Posterior vena cava (tissue), 2 donors: ENCODE measurements at regions of chr5 and their contacts with region 1.

Region 1: GRCh38 chr5:76069061-76069735 is 14.0 kb upstream of the SV2C start:
- DNase-seq: no peak

Region 2: GRCh38 chr5:76021936-76022584 is 47.1 kb before region 1 on chr5:
- intact Hi-C with region 1: loop called in 1 of 2 experiments (anchors 2 kb)
- DNase-seq: no peak

Region 3: GRCh38 chr5:76082772-76083554 is 13.8 kb after region 1 on chr5 and contains the start of gene SV2C:
- intact Hi-C with region 1: no loop called
- DNase-seq: peak; percentile 79
- total RNA-seq, gene SV2C: 0.05 TPM in 1 of 2 donors, not detected in the other